ENCODE measurements at regions of chr13 and their contacts with region 1.

Region 1: GRCh38 chr13:108895220-108895704 is 265.9 kb downstream of the MYO16 start:
- DNase-seq: no peak
- H3K4me3 Mint-ChIP-seq: no peak overlapping the region
- H3K27ac Mint-ChIP-seq: no peak overlapping the region
- H3K4me1 Mint-ChIP-seq: peaks cover 14% of the 10 kb centered on the region
- H3K27me3 Mint-ChIP-seq: peaks cover 8% of the 10 kb centered on the region

Region 2: DNA sequence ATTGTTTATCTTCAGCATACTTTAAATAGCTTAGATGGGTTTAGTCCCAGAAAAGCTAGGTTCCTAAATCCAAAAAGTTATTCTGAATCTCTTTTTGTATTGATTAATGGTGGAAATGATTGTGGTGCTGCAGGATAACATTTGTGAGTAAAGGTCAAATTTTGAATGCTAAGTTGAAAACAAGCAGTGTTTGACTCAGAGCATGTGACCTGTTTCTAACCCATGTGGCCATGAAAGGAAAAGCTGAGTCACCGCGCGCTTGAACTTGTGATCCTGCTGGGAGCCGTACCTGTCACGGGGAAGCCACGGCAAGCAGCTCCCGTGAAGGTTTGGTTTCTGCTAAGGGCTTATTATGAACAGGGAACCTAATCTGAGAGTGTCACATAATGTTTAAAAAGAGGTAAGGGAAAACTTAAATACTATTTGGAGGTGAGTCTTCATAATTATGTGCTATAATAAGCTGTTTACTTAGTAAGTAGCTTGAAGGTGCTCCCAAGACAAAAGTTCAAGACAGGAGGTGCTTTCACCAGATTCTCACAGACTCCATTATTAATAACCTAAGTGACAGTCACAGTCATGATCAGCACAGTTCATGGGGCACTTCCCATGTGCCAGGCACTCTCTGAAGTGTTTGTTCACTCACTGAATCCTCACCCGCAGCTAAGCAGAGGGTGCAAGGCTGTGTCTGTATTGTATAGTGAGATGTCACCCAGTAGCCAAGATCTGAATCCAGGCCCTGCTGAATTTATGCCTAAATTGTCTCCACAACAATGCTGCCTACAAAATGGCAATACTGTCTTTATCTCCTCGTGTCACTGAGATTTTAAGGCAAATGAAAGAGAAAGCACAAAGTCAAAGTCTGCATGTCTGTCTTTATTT is 20.6 kb after region 1 on chr13:
- CTCF ChIA-PET with region 1: interaction called, 32 read pairs
- DNase-seq: peak; percentile 85
- H3K4me3 Mint-ChIP-seq: peak overlapping the region; percentile 19
- H3K27ac Mint-ChIP-seq: peak overlapping the region; percentile 55
- H3K4me1 Mint-ChIP-seq: peaks cover 19% of the 10 kb centered on the region
- H3K27me3 Mint-ChIP-seq: peaks cover 7% of the 10 kb centered on the region